Common myeloid progenitor, CD34-positive (primary cell): ENCODE measurements at regions of chr14 and their contacts with region 1.

Region 1: DNA sequence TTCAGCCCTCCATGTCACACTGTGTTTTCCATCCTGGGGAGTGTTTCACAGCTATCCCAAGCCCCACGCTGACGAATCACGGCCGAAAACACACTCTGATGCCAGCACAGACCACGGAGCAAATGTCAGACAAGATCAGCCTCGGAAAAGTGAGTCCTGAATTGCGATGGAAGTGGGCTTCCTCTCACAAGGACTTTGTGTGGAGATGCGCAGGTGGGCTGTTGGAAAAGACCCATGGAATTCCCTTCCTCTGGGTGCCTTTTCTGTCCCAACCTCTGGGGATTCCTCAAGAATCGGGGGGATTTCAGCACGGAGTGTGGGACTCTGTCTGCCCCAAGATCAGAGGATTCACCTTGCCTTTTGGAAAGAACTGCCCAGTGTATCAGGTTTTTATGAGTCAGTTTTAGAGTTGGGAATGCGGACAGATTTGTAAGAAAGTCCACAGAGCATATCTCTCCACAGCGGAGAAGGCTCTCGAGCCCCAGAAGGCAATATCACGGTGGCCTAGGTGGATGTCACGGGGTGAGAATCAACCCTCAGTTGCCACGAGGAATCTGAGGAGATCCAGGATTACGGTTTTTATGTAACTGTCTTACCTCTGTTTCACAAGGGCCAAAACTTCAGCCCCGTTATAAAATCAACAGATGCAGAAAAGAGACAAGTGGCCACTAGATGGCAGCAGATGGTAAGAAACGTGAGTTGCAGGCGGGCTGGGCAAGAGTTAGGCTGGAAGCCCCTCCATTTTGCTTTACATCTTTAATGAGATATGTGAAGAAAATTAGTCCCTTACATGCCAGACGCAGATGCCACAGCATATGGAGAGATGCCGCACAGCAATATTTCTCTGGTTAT is 201.9 kb downstream of the DAD1 start:
- DNase-seq: peak; percentile 82 to 92 (median 86)
- H3K4me3 ChIP-seq: no peak overlapping the region
- H3K27ac ChIP-seq: no peak overlapping the region
- H3K4me1 ChIP-seq: peaks cover 0 to 2% (median under 1%) of the 10 kb centered on the region in 4 experiments
- H3K27me3 ChIP-seq: peaks cover 0 to 2% (median 0%) of the 10 kb centered on the region in 5 experiments

Region 2: GRCh38 chr14:22412926-22413411 is 25.8 kb after region 1 on chr14:
- CTCF ChIA-PET with region 1: interaction called, 13 read pairs
- POLR2A ChIA-PET with region 1: no interaction called
- DNase-seq: no peak
- H3K4me3 ChIP-seq: no peak overlapping the region
- H3K27ac ChIP-seq: no peak overlapping the region
- H3K4me1 ChIP-seq: peaks cover 6 to 28% (median 12%) of the 10 kb centered on the region in 4 experiments
- H3K27me3 ChIP-seq: no peaks in the 10 kb centered on the region

Region 3: GRCh38 chr14:22418631-22419030 is 31.5 kb after region 1 on chr14:
- CTCF ChIA-PET with region 1: interaction called, 18 read pairs
- POLR2A ChIA-PET with region 1: no interaction called
- DNase-seq: peak; percentile 19 to 82 (median 57)
- H3K4me3 ChIP-seq: peak overlapping the region in 2 of 7 experiments; percentile 2 to 19
- H3K27ac ChIP-seq: peak overlapping the region in 1 of 2 experiments; percentile 7
- H3K4me1 ChIP-seq: peaks cover 19 to 69% (median 59%) of the 10 kb centered on the region in 4 experiments
- H3K27me3 ChIP-seq: no peaks in the 10 kb centered on the region

Region 4: DNA sequence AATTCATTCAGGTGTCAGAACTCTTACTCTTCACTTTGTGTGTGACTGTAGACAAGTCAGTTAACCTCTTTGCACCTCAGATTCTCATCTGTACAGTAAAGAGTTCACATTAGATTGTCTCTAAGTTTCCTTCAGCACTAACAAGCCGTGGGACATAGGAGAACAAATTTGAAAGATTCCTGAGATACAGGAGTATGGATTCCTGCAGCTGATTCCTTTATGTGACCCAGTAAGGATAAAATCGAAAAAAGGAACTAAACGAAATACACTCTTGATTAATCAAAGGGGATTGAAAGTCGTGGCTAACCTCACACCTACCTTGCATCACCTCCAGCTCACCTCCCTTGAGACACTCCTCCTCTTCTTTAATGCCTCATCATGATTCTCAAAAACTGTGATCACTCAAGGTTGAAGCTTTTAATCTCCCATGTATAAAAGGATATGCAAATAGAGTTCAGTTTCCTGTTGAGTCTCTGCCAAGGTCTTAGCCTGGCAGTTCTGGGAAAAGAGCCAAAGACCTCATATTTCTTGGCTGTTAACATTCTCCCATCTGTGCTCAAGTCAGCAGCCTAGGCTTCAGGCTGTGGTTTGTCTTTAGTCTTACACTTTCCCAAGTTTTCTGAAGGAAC is 45.3 kb after region 1 on chr14:
- CTCF ChIA-PET with region 1: interaction called, 18 read pairs
- POLR2A ChIA-PET with region 1: no interaction called
- DNase-seq: peak; percentile 88 to 92 (median 91)
- H3K4me3 ChIP-seq: peak overlapping the region in 5 of 7 experiments; percentile 43 to 79 (median 61)
- H3K27ac ChIP-seq: peak overlapping the region in 1 of 2 experiments; percentile 62
- H3K4me1 ChIP-seq: peaks cover 40 to 93% (median 81%) of the 10 kb centered on the region in 4 experiments
- H3K27me3 ChIP-seq: no peaks in the 10 kb centered on the region

Region 5: GRCh38 chr14:22460461-22461195 is 73.5 kb after region 1 on chr14:
- CTCF ChIA-PET with region 1: interaction called, 54 read pairs
- POLR2A ChIA-PET with region 1: no interaction called
- DNase-seq: peak; percentile 74 to 97 (median 93)
- H3K4me3 ChIP-seq: peak overlapping the region in 3 of 7 experiments; percentile 27 to 56 (median 30)
- H3K27ac ChIP-seq: peak overlapping the region; percentile 34 to 75
- H3K4me1 ChIP-seq: peaks cover 22 to 78% (median 59%) of the 10 kb centered on the region in 4 experiments
- H3K27me3 ChIP-seq: no peaks in the 10 kb centered on the region

Region 6: DNA sequence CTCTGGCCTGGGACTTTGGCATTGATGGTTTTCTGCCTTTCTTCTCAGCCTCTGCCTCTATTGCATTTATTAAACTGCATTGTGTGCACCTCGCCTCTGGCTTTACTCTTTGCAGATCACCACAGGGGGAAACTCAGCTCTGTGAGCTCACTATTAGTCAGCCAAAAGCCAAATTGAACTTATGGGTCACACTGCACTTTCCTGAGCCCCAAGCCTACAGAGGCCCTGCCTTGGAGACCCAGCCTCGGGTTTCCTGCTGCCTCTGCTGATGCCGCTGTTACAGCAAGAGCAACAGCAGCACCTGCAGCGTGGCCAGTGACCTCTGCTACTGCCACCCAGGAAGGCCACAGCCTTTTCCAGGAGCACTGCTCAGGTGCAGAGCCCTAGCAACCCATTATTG is 79.3 kb after region 1 on chr14:
- CTCF ChIA-PET with region 1: interaction called, 366 read pairs
- POLR2A ChIA-PET with region 1: no interaction called
- DNase-seq: no peak
- H3K4me3 ChIP-seq: no peak overlapping the region
- H3K27ac ChIP-seq: no peak overlapping the region
- H3K4me1 ChIP-seq: peaks cover 10 to 54% (median 26%) of the 10 kb centered on the region in 4 experiments
- H3K27me3 ChIP-seq: no peaks in the 10 kb centered on the region

Region 7: GRCh38 chr14:22556990-22557623 is 170.0 kb after region 1 on chr14:
- CTCF ChIA-PET with region 1: interaction called, 25 read pairs
- POLR2A ChIA-PET with region 1: no interaction called
- DNase-seq: peak; percentile 84 to 88 (median 85)
- H3K4me3 ChIP-seq: peak overlapping the region in 6 of 7 experiments; percentile 0 to 76 (median 54)
- H3K27ac ChIP-seq: peak overlapping the region; percentile 61 to 84
- H3K4me1 ChIP-seq: peaks cover 30 to 78% (median 67%) of the 10 kb centered on the region in 4 experiments
- H3K27me3 ChIP-seq: no peaks in the 10 kb centered on the region